CD4-positive, alpha-beta T cell (primary cell): ENCODE measurements at regions of chr7 and their contacts with region 1.

Region 1: DNA sequence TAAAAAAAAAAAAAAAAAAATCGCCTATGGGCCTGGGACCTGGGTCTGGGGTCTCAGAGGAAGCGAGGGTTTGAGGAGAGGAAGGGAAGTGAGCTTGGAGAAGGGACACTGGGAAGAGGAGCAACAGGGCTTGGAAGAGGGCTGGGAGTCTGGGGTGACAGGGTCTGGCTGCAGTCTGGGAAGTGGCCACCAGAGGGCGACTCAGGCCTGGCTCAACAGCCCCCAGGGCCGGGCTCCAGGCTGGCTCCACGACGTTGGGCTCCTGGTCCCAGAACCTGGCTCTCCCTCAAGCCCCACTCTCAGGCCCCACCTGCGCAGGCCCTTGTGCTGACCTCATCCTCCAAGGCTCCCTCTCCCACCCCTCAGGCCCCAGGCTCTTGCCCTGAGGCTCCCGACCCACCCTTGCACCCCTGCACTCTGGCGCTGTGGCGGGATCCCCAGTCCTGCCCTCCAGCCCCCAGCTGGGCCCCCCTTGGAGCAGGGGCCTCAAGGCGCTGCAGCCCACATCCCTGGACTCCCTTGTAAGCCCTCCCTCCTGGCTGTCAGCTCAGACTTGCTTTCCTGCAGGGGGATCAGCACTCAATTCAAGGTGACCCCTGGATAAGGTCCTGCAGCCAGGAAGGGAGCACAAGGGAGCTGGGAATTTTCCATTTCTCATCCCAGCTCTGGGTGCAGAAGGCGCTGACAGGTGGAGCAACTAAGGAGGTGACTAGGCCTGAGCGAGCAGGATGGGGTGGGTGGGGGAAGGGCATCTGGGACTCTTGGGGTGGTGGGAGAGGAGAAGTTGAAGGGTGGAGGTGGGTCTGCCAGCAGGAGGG is 5.4 kb upstream of the SPACDR start:
- DNase-seq: peak; percentile 70 to 92 (median 82)
- ATAC-seq: peak; percentile 97
- H3K4me3 ChIP-seq: no peak overlapping the region
- H3K4me3 Mint-ChIP-seq: no peak overlapping the region
- H3K27ac ChIP-seq: no peak overlapping the region
- H3K27ac Mint-ChIP-seq: no peak overlapping the region
- H3K4me1 ChIP-seq: peaks cover 38% of the 10 kb centered on the region
- H3K4me1 Mint-ChIP-seq: peaks cover 32% of the 10 kb centered on the region
- H3K27me3 ChIP-seq: no peaks in the 10 kb centered on the region
- H3K27me3 Mint-ChIP-seq: no peaks in the 10 kb centered on the region
- CTCF ChIP-seq: peak; percentile 90

Region 2: DNA sequence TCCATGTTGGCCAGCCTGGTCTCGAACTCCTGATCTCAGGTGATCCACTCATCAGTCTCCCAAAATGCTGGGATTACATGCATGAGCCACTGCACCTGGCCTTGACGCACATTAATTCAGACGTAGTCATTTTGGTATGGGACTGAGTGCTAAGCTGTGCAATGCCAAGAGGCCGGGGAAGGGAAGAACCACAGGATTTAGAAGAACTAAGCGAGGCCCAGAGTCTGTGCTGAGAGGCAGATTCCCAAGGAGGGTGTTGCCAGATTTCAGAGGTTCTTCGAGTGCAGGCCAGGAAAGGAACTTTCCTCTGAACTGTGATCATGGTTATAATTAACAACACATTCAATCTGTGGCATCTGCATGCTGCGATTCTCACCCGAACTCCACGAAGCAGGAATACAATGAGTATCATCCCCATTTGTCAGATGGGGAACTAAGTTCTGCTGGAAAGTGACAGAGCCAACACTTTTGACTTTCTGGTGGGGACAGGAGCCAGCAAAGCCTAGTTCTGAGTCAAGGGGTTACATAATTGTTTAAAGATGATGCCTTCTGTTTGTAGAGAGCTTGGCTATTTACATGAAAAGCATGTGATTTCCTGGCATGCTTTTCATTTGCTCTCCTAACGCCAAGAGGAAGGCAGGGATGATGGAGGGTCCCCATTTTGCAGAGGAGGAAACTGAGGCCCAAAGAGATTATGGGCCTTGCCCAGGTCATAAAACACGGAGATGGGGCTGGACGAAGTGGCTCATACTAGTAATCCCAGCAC is 257.7 kb after region 1 on chr7:
- CTCF ChIA-PET with region 1: interaction called, 3 read pairs
- POLR2A ChIA-PET with region 1: no interaction called
- intact Hi-C with region 1: loop called (anchors 1 to 2 kb)
- DNase-seq: no peak
- ATAC-seq: no peak
- H3K4me3 ChIP-seq: no peak overlapping the region
- H3K4me3 Mint-ChIP-seq: no peak overlapping the region
- H3K27ac ChIP-seq: no peak overlapping the region
- H3K27ac Mint-ChIP-seq: no peak overlapping the region
- H3K4me1 ChIP-seq: peaks cover 3% of the 10 kb centered on the region
- H3K4me1 Mint-ChIP-seq: peaks cover 5% of the 10 kb centered on the region
- H3K27me3 ChIP-seq: peaks cover 2 to 16% of the 10 kb centered on the region in 2 experiments
- H3K27me3 Mint-ChIP-seq: peaks cover 40% of the 10 kb centered on the region
- CTCF ChIP-seq: no peak